PC-3 (cell line): ENCODE measurements at regions of chr18 and their contacts with region 1.

Region 1: DNA sequence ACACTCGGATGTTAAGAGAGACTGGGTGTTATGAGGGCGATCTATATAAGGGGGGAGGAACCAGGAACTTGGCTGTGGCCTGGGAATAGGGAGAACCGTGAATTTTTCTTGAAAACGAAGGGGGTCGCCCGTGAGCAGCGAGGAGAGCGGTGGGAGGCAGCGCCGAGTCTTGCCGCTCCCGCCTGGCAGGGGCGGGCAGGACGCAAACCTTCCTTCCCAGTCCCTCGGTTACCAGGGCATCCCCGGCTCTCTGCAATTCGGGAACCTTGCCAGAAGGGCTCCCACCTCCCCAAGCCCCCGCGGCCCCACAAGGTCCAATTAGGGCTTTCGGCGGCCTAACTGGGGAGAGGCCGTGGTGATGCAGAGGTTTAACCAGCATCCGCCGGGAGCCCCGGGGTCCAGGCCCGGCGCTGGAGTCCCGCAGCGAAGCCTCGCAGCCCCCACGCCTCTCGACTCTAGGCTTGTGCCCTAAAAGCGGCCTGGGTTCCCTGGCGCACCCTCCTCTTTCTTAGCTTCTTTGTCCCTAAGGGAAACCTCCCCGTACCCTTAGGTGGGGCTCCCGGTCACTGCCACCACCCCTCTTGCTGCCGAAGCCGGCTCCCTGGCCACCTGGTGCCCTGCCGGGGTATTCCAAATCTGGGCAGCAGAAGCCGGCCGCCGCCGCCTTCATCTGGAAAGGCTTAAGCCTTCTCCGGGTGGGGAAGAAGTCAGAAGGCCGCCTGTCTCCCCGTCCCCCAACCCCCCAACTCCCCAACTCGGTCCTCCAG is 680 bp upstream of the FHOD3 start:
- DNase-seq: peak; percentile 48
- ATAC-seq: peak; percentile 65
- H3K4me3 ChIP-seq: peak overlapping the region; percentile 67
- H3K27ac ChIP-seq: peak overlapping the region; percentile 65
- H3K4me1 ChIP-seq: 0 out of 2 replicates have a peak, but pooled peaks cover 7% of the 10 kb centered on the region
- H3K27me3 ChIP-seq: no peaks in the 10 kb centered on the region
- CTCF ChIP-seq: peak; percentile 53

Region 2: DNA sequence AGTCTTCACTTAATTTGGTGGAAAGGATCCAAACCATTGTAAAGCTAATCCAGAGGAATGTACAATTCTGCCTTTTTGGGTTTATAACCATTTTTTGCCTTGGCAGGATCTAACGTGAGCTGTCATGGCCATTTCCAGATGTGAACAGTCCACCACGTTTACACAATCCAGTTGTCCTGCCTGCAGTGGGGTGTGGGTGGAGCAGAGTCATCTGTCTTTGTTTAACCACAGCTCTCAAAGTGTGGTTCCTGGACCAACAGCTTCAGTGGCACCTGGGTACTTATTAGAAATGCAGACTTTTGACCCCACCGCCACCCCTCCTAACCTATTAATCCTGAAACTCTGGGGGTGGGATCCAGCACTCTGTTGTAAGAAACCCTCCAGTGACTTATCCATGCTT is 36.6 kb after region 1 on chr18:
- CTCF ChIA-PET with region 1: no interaction called
- POLR2A ChIA-PET with region 1: no interaction called
- intact Hi-C with region 1: no loop called
- DNase-seq: no peak
- ATAC-seq: no peak
- H3K4me3 ChIP-seq: no peak overlapping the region
- H3K27ac ChIP-seq: no peak overlapping the region
- H3K4me1 ChIP-seq: no peaks in the 10 kb centered on the region; the same call in 1 of the 2 replicates
- H3K27me3 ChIP-seq: no peaks in the 10 kb centered on the region
- CTCF ChIP-seq: no peak

Region 3: GRCh38 chr18:36372903-36373311 is 76.1 kb after region 1 on chr18:
- CTCF ChIA-PET with region 1: no interaction called
- POLR2A ChIA-PET with region 1: no interaction called
- intact Hi-C with region 1: loop called (anchors 2 kb)
- DNase-seq: peak; percentile 40
- ATAC-seq: peak; percentile 37; the same call in 1 of the 2 replicates
- H3K4me3 ChIP-seq: no peak overlapping the region
- H3K27ac ChIP-seq: no peak overlapping the region
- H3K4me1 ChIP-seq: peaks cover 16% of the 10 kb centered on the region
- H3K27me3 ChIP-seq: no peaks in the 10 kb centered on the region
- CTCF ChIP-seq: peak; percentile 25; the same call in 1 of the 2 replicates

Region 4: DNA sequence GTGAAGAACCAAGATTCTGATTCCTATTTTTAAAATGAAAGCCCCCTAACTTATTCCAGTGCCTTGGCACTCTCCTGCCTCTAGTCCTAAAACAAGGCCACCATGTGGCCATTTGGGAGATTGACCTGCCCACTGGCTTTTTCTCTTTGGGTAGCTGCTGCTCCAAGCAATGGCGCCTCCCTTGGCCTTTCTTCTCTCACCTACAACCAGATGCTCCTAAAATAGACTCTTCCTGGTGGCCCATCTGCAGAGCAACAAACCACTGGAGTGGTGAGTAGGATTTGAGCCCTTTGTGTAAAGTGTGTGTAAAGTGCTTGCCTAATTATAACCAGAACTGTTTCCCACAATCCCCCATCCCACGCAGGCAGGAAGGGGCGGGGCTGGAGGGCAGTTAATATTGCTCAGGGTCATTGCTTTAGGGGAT is 114.9 kb after region 1 on chr18:
- CTCF ChIA-PET with region 1: no interaction called
- POLR2A ChIA-PET with region 1: no interaction called
- intact Hi-C with region 1: loop called (anchors 1 kb)
- DNase-seq: peak; percentile 44
- ATAC-seq: peak; percentile 37; the same call in 1 of the 2 replicates
- H3K4me3 ChIP-seq: no peak overlapping the region
- H3K27ac ChIP-seq: no peak overlapping the region
- H3K4me1 ChIP-seq: no peaks in the 10 kb centered on the region
- H3K27me3 ChIP-seq: no peaks in the 10 kb centered on the region
- CTCF ChIP-seq: peak; percentile 60

Region 5: GRCh38 chr18:36572135-36572856 is 275.5 kb after region 1 on chr18:
- CTCF ChIA-PET with region 1: no interaction called
- POLR2A ChIA-PET with region 1: no interaction called
- intact Hi-C with region 1: loop called (anchors 1 kb)
- DNase-seq: peak; percentile 36
- ATAC-seq: peak; percentile 75
- H3K4me3 ChIP-seq: no peak overlapping the region
- H3K27ac ChIP-seq: no peak overlapping the region
- H3K4me1 ChIP-seq: no peaks in the 10 kb centered on the region
- H3K27me3 ChIP-seq: no peaks in the 10 kb centered on the region
- CTCF ChIP-seq: peak; percentile 70

Region 6: DNA sequence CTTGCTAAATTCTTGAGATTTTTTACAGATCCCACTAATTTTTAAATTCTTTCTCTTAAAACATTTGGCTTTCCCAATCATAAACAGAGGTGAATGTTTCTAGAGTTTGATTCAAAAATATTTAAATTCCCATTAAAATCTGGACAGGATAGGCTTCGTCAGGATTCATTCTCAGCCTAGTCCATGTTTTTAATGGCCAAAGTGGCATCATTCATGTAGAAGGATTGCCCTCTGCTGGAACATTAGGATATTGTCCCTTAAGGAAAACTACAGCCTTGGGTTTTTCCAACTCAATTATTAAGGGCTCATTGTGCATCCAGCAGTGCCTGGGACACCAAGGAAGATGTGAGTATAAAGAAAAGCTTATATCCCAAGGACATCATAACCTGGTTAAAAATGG is 460.2 kb after region 1 on chr18:
- CTCF ChIA-PET with region 1: no interaction called
- POLR2A ChIA-PET with region 1: no interaction called
- intact Hi-C with region 1: loop called (anchors 10 kb)
- DNase-seq: peak; percentile 53
- ATAC-seq: peak; percentile 56
- H3K4me3 ChIP-seq: no peak overlapping the region
- H3K27ac ChIP-seq: no peak overlapping the region
- H3K4me1 ChIP-seq: no peaks in the 10 kb centered on the region
- H3K27me3 ChIP-seq: no peaks in the 10 kb centered on the region
- CTCF ChIP-seq: peak; percentile 57